ENCODE measurements at regions of chr14 and their contacts with region 1.

Region 1: GRCh38 chr14:56339855-56340701 is 221.9 kb downstream of the PELI2 start:
- DNase-seq: peak; percentile 86

Region 2: DNA sequence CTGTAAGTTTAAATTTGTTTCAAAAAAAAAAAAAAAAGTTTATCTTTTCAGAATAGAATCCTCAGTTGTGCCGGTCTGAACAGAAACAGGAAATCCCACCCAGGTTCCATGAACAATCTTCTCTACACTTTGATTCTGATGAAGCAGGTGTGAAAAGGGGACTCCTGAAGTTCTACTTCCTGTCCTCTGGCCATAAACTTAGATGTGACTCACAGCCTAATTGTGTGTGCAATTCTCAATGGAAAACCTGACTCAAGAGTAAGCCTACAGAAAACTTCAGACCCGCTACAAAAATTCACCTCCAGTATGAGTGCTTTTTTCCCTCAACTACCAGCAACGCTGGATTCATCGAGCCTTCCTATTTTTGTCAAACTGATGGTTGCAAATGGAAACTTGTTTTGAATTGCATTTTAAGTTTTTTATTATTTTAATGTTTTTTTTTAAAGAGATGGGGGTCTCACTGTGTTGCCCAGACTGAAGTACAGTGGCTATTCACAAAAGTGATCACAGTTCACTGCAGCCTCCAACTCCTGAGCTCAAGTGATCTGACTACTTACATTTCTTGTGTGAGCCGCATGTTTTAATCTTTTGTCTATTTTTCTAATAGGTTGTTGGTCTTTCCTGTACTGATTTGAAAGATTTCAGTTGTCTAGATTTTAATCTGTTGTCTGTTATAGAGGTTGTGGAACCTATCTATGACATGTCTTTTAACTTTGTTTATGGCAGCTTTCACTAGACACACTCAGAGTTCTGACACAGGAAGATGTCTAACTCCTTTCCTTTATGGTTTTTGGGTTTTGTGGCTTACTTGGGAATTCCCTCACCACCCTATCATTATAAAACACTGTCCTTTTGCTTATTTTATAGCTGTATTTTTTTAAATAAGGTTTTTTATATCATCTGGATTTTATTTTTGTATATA is 966.0 kb before region 1 on chr14:
- intact Hi-C with region 1: no loop called
- DNase-seq: no peak

Region 3: GRCh38 chr14:55707365-55707804 is 632.7 kb before region 1 on chr14:
- intact Hi-C with region 1: loop called (anchors 5 kb)
- DNase-seq: no peak

Region 4: DNA sequence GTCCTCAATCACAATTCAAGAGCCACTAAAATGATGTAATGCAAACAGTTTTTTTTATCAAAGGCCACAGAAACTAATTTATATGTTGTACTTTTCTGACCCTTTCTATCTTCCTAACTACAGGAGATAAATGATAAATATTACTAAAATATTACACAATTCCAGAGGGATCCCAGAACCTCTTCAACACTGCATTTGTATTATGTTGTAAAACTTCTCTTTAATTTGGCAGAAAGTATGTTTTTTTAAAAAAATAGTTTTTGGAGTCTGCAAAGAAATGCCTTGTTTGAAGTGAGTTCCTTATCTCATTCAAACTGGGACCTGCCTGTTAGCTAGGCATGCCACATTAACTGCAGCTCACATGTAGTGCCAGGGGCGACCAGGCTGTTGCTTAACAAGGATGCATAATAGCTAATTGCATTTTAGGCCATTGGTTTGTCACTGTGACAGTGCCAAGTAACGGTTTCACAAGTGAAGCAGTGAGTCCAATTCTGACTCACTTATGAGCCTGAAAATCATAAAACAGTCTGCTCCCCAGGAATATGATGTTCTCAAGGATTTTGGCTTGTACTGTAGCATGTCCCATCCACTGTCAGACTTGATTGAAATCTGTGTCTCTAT is 493.1 kb before region 1 on chr14:
- intact Hi-C with region 1: loop called (anchors 5 kb)
- DNase-seq: no peak

Region 5: DNA sequence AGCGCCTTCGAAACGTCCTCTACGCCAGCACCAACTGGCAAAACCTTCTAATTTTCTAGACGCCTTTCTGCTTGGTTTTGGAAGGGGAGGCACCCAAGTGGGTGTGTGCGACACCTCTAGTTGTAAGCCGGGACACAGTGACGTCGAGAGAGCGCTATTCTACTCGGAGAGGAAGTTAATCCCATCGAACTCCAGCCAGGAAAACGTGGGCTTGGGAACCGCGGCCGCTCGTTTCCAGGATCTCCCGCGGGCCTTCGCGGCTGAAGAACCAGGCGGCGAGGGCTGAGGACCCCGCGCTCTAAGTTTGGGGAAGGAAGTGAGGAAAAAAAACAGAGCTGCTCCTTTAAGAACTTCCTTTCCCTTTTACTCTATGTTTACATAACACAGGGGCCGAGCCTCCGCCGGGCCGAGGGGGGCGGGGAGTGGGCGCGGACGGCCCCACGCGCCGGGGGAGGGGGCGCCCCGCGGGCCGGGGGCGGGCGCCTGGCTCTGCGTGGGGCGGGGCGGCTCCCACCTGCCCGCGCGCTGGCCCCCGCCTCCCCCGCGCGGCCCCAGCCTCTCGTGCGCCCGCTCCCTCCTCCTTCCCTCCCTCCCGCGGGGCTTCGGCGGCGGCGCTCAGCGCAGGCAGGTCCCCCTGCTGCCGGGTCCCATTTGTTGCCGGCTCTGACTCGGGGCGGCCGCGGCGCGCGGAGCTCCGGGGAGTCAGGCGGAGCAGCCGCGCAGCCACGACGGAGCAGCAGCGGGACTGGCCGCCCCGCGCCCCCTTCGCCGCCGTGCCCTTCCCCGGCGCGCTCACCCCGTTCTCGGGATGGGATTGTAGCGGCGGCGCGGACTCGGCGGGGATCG is 222.1 kb before region 1 on chr14 and contains the start of gene PELI2:
- intact Hi-C with region 1: loop called (anchors 5 kb)
- DNase-seq: peak; percentile 89
- total RNA-seq, gene PELI2: 3.4 TPM

Region 6: GRCh38 chr14:56241461-56241860 is 98.6 kb before region 1 on chr14:
- intact Hi-C with region 1: no loop called
- DNase-seq: no peak

Region 7: DNA sequence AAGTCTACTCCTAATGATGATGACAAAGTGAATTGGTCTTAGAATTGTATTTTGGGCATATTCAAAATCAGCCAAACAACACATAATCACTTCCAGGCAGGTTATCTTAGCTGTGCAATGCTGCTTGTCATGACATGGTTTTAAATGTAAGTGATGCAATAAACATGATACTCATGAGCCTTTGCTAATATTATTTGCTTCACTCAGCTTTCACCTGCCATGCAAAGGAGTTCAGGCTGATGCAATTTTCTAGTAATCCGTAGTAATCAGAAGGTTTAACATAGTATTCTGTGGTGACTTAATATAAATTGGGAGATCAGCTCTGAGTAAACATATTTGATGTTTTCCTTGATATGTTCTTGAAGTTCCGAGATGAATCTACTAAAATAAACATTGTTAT is 268.6 kb after region 1 on chr14:
- intact Hi-C with region 1: no loop called
- DNase-seq: no peak

Region 8: DNA sequence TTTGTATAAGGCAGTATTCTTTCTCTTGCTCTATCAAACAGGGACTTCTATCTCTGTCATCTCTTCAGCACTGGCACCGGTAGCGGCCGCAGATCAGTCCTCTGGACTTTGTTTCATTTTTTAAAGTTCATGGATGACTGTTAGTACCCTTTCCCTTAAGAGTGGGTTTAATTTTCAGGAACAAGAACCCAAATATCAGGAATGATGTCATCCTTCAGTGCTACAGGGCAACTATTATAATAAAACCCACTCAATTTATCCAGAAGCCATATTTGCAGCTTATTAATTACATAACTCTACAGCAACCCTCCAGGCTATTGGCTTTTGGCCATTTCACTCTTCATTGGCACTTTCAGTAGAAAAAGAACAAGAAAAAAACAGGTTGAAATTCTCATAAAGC is 424.3 kb after region 1 on chr14:
- intact Hi-C with region 1: no loop called
- DNase-seq: no peak

Measured in cardiac septum (tissue), 1 donor.